Activated CD4-positive, alpha-beta T cell treated with anti-CD3 and anti-CD28 coated beads for 36 hours (primary cell): ENCODE measurements at regions of chr6 and their contacts with region 1.

Region 1: DNA sequence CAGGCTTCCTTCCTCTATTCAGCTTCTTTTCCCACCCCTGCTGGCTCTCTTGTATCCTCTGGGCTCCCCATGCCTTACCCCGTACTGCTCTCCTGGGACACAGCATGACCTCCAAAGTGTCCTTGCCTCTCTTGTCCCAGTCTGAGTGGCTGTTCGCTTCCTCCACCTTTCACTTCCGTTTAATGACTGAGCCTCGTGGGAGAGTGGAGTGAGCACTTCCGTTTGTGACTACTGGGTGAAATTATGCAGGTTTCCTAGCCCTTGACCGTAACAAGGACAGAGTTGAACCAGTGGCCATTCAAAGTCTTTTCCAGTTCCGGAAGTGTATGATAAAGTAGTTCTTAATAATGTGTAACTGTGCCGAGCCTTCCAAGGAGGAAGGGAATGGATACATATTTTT is 109.2 kb downstream of the ARID1B start:
- DNase-seq: peak; percentile 32
- ATAC-seq: peak; percentile 40
- H3K4me3 Mint-ChIP-seq: no peak overlapping the region
- H3K27ac Mint-ChIP-seq: peak overlapping the region; percentile 58
- H3K4me1 Mint-ChIP-seq: peaks cover 69% of the 10 kb centered on the region
- H3K27me3 Mint-ChIP-seq: no peaks in the 10 kb centered on the region

Region 2: DNA sequence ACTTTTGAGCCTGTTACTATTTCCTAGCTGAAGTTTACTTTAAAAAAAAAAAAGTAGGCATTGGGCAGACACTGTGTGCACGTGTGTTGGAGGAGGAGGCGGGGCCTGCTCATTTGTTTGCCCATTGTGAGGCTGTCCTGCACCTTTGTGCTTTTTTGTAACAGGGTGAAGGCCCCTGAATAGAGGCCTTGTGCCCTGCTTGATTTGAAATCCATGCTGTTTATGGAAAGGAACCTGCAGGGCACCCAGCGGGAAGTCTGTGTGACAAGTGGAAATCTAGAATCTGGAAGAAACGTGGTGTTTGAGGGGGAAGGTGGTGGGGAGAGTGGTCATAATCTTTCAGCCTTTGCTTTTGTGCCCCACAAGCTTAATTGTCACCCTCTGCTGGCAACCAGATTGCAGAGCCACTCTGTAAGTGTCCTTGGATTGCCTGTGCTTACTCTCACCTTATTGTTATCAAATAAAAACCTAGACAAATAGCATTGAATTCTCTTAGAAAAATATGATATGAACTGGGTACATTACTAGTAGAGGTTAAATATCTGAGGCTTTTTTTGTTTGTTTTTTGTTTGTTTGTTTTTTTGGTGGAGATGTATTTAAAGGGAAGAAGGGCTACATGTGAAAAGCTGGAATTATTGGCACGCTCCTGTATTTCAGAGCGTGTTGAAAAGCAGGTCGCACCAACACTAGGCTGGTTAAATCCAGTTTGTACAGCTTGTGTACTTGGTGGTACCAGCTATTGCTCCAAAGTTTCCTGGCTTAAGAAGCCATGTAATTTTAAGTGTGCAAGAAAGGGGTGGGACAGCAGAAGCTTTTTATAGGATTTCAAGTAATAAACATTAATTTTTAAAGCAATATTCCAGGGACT is 47.0 kb after region 1 on chr6:
- CTCF ChIA-PET with region 1: no interaction called
- POLR2A ChIA-PET with region 1: no interaction called
- intact Hi-C with region 1: loop called in 1 of 2 experiments (anchors 5 kb)
- DNase-seq: no peak
- ATAC-seq: no peak
- H3K4me3 Mint-ChIP-seq: no peak overlapping the region
- H3K27ac Mint-ChIP-seq: peak overlapping the region; percentile 2
- H3K4me1 Mint-ChIP-seq: peaks cover 77% of the 10 kb centered on the region
- H3K27me3 Mint-ChIP-seq: no peaks in the 10 kb centered on the region